Activated CD8-positive, alpha-beta memory T cell treated with anti-CD3 and anti-CD28 coated beads, Interleukin-2, amount 10 ng/mL, durations not matched to agents 7 days and 5 days (primary cell): ENCODE measurements at regions of chr3 and their contacts with region 1.

Region 1: GRCh38 chr3:142828703-142829305 is 60.1 kb downstream of the PCOLCE2 start:
- DNase-seq: peak; percentile 80
- ATAC-seq: peak; percentile 93
- H3K4me3 Mint-ChIP-seq: no peak overlapping the region
- H3K27ac Mint-ChIP-seq: no peak overlapping the region
- H3K4me1 Mint-ChIP-seq: no peaks in the 10 kb centered on the region
- H3K27me3 Mint-ChIP-seq: peaks cover 30% of the 10 kb centered on the region

Region 2: GRCh38 chr3:142817897-142818296 is 10.9 kb before region 1 on chr3:
- CTCF ChIA-PET with region 1: interaction called, 22 read pairs
- DNase-seq: no peak
- ATAC-seq: no peak
- H3K4me3 Mint-ChIP-seq: no peak overlapping the region
- H3K27ac Mint-ChIP-seq: no peak overlapping the region
- H3K4me1 Mint-ChIP-seq: no peaks in the 10 kb centered on the region
- H3K27me3 Mint-ChIP-seq: peaks cover 38% of the 10 kb centered on the region

Region 3: GRCh38 chr3:142853270-142854168 is 24.7 kb after region 1 on chr3:
- CTCF ChIA-PET with region 1: interaction called, 11 read pairs
- DNase-seq: no peak
- ATAC-seq: no peak
- H3K4me3 Mint-ChIP-seq: no peak overlapping the region
- H3K27ac Mint-ChIP-seq: no peak overlapping the region
- H3K4me1 Mint-ChIP-seq: no peaks in the 10 kb centered on the region
- H3K27me3 Mint-ChIP-seq: peaks cover 15% of the 10 kb centered on the region

Region 4: GRCh38 chr3:142993958-142994442 is 165.2 kb after region 1 on chr3:
- CTCF ChIA-PET with region 1: interaction called, 26 read pairs
- DNase-seq: peak; percentile 74
- ATAC-seq: peak; percentile 69
- H3K4me3 Mint-ChIP-seq: no peak overlapping the region
- H3K27ac Mint-ChIP-seq: no peak overlapping the region
- H3K4me1 Mint-ChIP-seq: peaks cover 4% of the 10 kb centered on the region
- H3K27me3 Mint-ChIP-seq: peaks cover 34% of the 10 kb centered on the region